ENCODE measurements at regions of chr11 and their contacts with region 1.

Region 1: DNA sequence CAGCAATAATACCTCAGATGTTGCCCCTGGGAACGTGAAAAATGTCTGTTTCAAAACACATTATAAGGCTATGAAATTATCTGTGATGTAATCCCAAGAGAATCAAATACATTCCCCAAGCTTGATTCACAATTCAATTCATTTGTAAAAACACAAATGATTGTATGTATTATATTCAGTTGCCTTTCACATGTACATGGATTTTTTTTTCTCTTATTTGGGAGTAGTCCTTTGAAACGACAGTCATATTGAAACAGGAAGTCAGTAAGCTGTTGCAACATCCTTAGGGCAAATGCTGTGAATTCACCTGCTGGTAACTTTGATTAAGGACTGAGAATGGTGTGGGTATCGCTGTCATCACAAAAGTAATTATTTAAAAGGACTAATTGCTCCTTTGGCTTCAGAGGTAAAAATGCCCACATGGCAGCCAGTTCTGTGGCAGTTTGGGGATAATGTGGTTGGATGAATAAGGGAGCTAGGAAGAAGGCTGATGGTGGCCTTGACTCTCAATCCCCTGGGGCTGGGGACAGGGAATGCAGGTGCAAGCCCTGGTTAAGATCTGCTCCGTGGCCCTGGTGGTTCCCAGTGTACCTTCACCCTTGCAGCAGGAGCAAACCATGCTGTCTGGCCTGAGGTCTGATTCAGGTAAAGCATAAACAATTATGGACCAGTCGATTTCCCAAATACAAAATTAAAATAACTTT is 13.2 kb downstream of the EHF start:
- DNase-seq: peak in 1 of 2 experiments; percentile 90
- H3K4me3 ChIP-seq: peak overlapping the region; percentile 45
- H3K27ac ChIP-seq: peak overlapping the region; percentile 91
- H3K4me1 ChIP-seq: peaks cover 100% of the 10 kb centered on the region
- H3K27me3 ChIP-seq: no peaks in the 10 kb centered on the region
- CTCF ChIP-seq: peak; percentile 41; the same call in 1 of the 2 replicates

Region 2: GRCh38 chr11:33730716-33731115 is 903.4 kb before region 1 on chr11:
- CTCF ChIA-PET with region 1: no interaction called
- POLR2A ChIA-PET with region 1: interaction called, 20 read pairs
- intact Hi-C with region 1: no loop called
- DNase-seq: no peak
- H3K4me3 ChIP-seq: no peak overlapping the region
- H3K27ac ChIP-seq: no peak overlapping the region
- H3K4me1 ChIP-seq: peaks cover 38% of the 10 kb centered on the region
- H3K27me3 ChIP-seq: no peaks in the 10 kb centered on the region
- CTCF ChIP-seq: no peak

Region 3: DNA sequence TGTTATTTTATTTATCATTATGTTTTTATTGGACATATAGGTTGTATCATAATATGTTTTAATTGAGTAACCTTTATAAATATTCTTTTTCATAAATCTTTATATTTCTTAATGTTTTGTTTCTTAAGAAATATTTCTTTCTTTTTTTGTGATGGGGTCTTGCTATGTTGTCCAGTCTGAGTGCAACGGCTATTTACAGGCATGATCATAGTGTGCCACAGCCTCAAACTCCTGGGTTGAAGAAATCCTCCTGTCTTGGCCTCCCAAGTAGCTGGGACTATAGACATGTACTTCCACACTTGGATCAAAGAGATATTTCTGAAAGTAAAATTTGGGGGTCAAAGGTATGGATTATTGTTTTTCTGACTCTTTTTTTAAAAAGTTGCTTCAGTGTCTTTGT is 39.9 kb after region 1 on chr11:
- CTCF ChIA-PET with region 1: no interaction called
- POLR2A ChIA-PET with region 1: no interaction called
- intact Hi-C with region 1: no loop called
- DNase-seq: no peak
- H3K4me3 ChIP-seq: no peak overlapping the region
- H3K27ac ChIP-seq: no peak overlapping the region
- H3K4me1 ChIP-seq: peaks cover 12% of the 10 kb centered on the region
- H3K27me3 ChIP-seq: no peaks in the 10 kb centered on the region
- CTCF ChIP-seq: no peak

Measured in PC-9 (cell line).